H1 (cell line): ENCODE measurements at regions of chr12 and their contacts with region 1.

Region 1: DNA sequence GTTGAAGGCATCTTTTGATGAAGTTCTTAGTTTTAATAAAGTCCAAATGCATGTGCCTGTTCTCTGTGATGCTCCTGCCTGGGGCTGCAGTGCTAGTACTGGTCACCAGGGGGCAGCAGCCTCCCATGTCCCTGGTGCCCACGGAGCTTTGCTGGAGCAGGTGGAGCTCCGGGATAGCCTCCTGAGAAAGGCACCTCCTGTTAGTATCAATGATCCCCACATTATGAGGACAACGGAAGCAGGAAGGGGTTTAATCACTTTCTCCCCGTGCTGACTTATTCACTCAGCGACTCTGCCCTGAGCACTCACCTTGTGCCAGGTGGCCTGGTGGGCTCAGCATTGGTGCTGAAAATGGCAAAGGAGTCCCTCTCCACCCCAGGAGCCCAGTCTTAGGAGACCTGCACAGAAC is 123.0 kb upstream of the PZP start:
- DNase-seq: peak; percentile 51 to 94
- H3K4me3 ChIP-seq: no peak overlapping the region
- H3K27ac ChIP-seq: no peak overlapping the region
- H3K4me1 ChIP-seq: no peaks in the 10 kb centered on the region
- H3K27me3 ChIP-seq: no peaks in the 10 kb centered on the region
- CTCF ChIP-seq: peak; percentile 90 to 96 (median 93)
- EP300 ChIP-seq: no peak
- POLR2A ChIP-seq: no peak
- RAD21 ChIP-seq: peak; percentile 95 to 97

Region 2: DNA sequence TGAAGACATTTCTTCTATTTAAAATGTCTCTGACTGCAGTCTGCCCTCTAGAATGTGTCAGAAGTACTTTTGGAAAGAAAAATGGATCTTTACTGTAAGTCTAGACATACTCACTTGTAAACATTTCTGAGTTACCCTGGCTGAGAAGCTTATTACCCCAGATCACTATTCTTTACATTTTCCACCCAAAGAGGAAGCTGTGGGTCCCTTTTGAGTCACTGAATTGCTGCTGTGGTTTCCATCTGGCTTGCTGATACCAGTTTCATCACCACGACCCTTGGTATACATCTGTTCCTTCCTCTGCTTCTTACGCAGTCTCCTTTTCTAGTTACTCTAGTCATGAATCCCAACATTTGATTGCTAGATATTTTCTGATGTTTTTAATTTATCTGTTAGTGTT is 838.1 kb before region 1 on chr12:
- CTCF ChIA-PET with region 1: no interaction called
- POLR2A ChIA-PET with region 1: no interaction called
- DNase-seq: no peak
- H3K4me3 ChIP-seq: no peak overlapping the region
- H3K27ac ChIP-seq: no peak overlapping the region
- H3K4me1 ChIP-seq: peaks cover 0 to 5% (median 2%) of the 10 kb centered on the region in 4 experiments; a peak in 5 of 7 replicates
- H3K27me3 ChIP-seq: no peaks in the 10 kb centered on the region
- CTCF ChIP-seq: no peak
- EP300 ChIP-seq: no peak
- POLR2A ChIP-seq: no peak
- RAD21 ChIP-seq: no peak

Region 3: DNA sequence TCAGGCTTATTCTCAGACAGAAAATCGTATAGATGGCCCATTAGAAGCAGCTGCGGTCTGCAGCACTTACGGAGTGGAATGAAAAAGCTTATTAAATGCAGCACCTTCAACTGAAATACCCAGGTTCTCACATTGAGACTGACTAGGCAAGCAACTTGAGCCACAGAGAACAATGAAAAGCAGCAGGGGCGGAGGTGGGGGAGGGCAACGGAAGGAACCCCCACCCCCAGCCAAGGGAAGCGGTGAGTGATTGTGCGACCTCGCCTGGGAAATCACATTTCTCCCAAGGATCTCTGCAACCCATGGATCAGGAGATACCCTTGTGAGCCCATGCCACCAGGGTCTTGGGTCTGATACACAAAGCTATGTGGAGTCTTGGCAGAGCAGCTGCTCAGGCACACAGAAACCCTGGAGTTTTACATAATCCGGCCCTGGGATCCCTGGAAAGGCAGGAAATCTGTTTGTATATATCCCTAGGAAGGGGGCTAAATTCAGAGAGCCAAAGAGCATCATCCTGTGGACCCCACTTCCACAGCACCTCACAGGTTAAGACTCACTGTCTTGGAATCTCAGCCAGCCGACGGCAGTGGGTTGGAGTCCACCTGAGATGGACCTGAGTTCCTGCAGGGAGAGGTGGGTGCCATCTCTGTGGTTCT is 161.1 kb before region 1 on chr12:
- CTCF ChIA-PET with region 1: no interaction called
- POLR2A ChIA-PET with region 1: no interaction called
- DNase-seq: peak in 1 of 2 experiments; percentile 63
- H3K4me3 ChIP-seq: peak overlapping the region in 1 of 4 experiments; percentile 41; a peak in 1 of 8 replicates
- H3K27ac ChIP-seq: no peak overlapping the region
- H3K4me1 ChIP-seq: peaks cover 0 to 6% (median 4%) of the 10 kb centered on the region in 4 experiments; a peak in 5 of 7 replicates
- H3K27me3 ChIP-seq: no peaks in the 10 kb centered on the region
- CTCF ChIP-seq: no peak
- EP300 ChIP-seq: no peak
- POLR2A ChIP-seq: no peak
- RAD21 ChIP-seq: no peak

Region 4: GRCh38 chr12:9347328-9348127 is 16.3 kb after region 1 on chr12:
- CTCF ChIA-PET with region 1: interaction called, 49 read pairs
- POLR2A ChIA-PET with region 1: no interaction called
- DNase-seq: no peak
- H3K4me3 ChIP-seq: no peak overlapping the region
- H3K27ac ChIP-seq: no peak overlapping the region
- H3K4me1 ChIP-seq: no peaks in the 10 kb centered on the region
- H3K27me3 ChIP-seq: no peaks in the 10 kb centered on the region
- CTCF ChIP-seq: no peak
- EP300 ChIP-seq: no peak
- POLR2A ChIP-seq: no peak
- RAD21 ChIP-seq: no peak

Region 5: GRCh38 chr12:9364224-9365176 is 33.3 kb after region 1 on chr12:
- CTCF ChIA-PET with region 1: interaction called, 52 read pairs
- POLR2A ChIA-PET with region 1: interaction called, 4 read pairs
- DNase-seq: peak; percentile 44 to 65
- H3K4me3 ChIP-seq: peak overlapping the region in 3 of 4 experiments; percentile 8 to 24 (median 24); a peak in 4 of 8 replicates
- H3K27ac ChIP-seq: peak overlapping the region; percentile 80
- H3K4me1 ChIP-seq: peaks cover 4 to 21% (median 12%) of the 10 kb centered on the region in 4 experiments; a peak in 6 of 7 replicates
- H3K27me3 ChIP-seq: no peaks in the 10 kb centered on the region
- CTCF ChIP-seq: no peak
- EP300 ChIP-seq: no peak
- POLR2A ChIP-seq: peak; percentile 90 to 98
- RAD21 ChIP-seq: no peak

Region 6: GRCh38 chr12:9378430-9378835 is 47.2 kb after region 1 on chr12:
- CTCF ChIA-PET with region 1: interaction called, 40 read pairs
- POLR2A ChIA-PET with region 1: interaction called, 3 read pairs
- DNase-seq: no peak
- H3K4me3 ChIP-seq: no peak overlapping the region
- H3K27ac ChIP-seq: no peak overlapping the region
- H3K4me1 ChIP-seq: no peaks in the 10 kb centered on the region; a peak in 3 of 7 replicates
- H3K27me3 ChIP-seq: no peaks in the 10 kb centered on the region
- CTCF ChIP-seq: peak; percentile 55 to 66 (median 65)
- EP300 ChIP-seq: no peak
- POLR2A ChIP-seq: no peak
- RAD21 ChIP-seq: peak; percentile 63 to 77

Region 7: GRCh38 chr12:9464408-9464807 is 133.2 kb after region 1 on chr12:
- CTCF ChIA-PET with region 1: interaction called, 14 read pairs
- POLR2A ChIA-PET with region 1: no interaction called
- DNase-seq: no peak
- H3K4me3 ChIP-seq: no peak overlapping the region
- H3K27ac ChIP-seq: no peak overlapping the region
- H3K4me1 ChIP-seq: no peaks in the 10 kb centered on the region
- H3K27me3 ChIP-seq: no peaks in the 10 kb centered on the region
- CTCF ChIP-seq: no peak
- EP300 ChIP-seq: no peak
- POLR2A ChIP-seq: no peak
- RAD21 ChIP-seq: no peak